ENCODE measurements at regions of chr10 and their contacts with region 1.

Region 1: GRCh38 chr10:35246770-35247343 is 89.5 kb upstream of the CCNY start:
- DNase-seq: no peak
- H3K4me3 ChIP-seq: no peak overlapping the region
- H3K27ac ChIP-seq: no peak overlapping the region
- H3K4me1 ChIP-seq: no peaks in the 10 kb centered on the region
- H3K27me3 ChIP-seq: no peaks in the 10 kb centered on the region
- CTCF ChIP-seq: no peak

Region 2: DNA sequence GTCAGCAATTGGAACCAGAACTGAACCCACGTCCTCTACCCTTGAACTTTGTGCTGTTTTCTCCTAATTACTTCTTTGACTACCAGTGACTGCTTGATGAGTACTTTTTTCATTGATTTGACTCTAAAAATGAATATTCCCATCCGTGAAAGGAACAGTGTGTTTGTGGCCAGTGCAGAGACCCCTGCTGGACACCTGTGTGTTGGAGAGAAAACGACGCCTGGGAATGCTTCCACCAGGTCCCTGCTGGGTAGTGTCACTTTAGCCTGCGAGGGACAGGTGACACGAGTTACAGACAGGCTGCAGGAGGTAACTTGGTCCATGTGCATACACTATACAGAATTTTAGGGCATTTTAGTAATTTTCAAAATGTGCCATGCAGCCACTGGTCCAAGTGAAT is 351.5 kb after region 1 on chr10:
- intact Hi-C with region 1: loop called (anchors 10 kb)
- DNase-seq: no peak
- H3K4me3 ChIP-seq: no peak overlapping the region
- H3K27ac ChIP-seq: no peak overlapping the region
- H3K4me1 ChIP-seq: no peaks in the 10 kb centered on the region
- H3K27me3 ChIP-seq: peaks cover 16% of the 10 kb centered on the region
- CTCF ChIP-seq: peak; percentile 66

Measured in left ventricle myocardium inferior (tissue), 1 donor.